Right ventricle myocardium superior (tissue), 1 donor: ENCODE measurements at regions of chr4 and their contacts with region 1.

Region 1: GRCh38 chr4:2217726-2218125 is 24.2 kb downstream of the HAUS3 start:
- DNase-seq: no peak
- ATAC-seq: no peak

Region 2: DNA sequence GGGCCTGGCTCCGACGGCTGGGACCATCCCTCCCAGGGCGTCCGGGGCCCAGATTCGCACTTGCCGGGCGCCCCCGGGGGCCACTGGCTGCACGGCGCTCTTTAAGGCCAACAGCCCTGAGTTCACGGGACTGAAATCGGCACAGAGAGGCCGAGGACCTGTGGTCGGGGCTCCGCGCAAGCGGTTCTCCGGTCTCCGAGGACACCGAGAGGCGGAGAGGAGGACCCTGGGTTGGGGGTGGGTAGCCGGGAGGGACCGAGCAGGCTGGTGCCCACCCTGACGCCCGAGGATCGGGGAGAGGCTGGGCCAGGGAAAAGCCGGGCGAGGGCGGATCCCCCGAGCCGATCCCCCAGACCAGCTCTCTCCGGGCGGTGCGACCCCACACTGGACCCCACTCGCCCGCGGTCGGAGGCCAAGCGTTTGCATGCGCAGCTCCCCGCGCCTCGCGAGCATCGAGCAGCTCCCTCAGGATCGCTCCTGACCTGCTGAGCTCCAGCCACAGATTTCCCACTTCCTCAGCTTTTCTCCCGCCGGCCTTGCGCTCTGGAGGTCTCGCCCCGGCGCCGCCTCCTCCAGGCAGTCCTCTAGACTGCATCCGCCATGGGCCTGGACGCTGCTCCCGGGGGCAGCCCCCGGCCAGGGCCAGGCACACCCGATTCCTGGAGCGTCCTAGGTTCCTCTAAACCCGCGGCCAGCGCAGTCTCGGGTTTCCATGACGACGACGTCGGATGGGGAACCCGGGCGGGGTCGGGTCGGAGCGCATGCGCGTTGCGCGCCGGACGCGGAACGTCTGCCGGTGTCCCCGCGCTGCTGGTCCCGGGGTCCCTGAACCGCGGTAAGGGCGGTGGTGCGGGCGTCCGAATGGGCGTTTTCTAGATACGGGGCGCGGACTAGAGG is 176.2 kb before region 1 on chr4:
- intact Hi-C with region 1: no loop called
- DNase-seq: peak; percentile 92
- ATAC-seq: peak; percentile 85

Region 3: GRCh38 chr4:2116687-2117400 is 100.9 kb before region 1 on chr4:
- intact Hi-C with region 1: no loop called
- DNase-seq: no peak
- ATAC-seq: no peak

Region 4: GRCh38 chr4:2462218-2462991 is 244.7 kb after region 1 on chr4:
- intact Hi-C with region 1: loop called (anchors 5 kb)
- DNase-seq: peak; percentile 77
- ATAC-seq: peak; percentile 96